Breast epithelium (tissue), 4 donors: ENCODE measurements at regions of chr4 and their contacts with region 1.

Region 1: GRCh38 chr4:156915221-156915620 is 56.4 kb downstream of the PDGFC start:
- DNase-seq: no peak
- H3K4me3 ChIP-seq: no peak overlapping the region
- H3K27ac ChIP-seq: no peak overlapping the region
- H3K4me1 ChIP-seq: no peaks in the 10 kb centered on the region
- H3K27me3 ChIP-seq: no peaks in the 10 kb centered on the region
- CTCF ChIP-seq: no peak
- POLR2A ChIP-seq: no peak

Region 2: DNA sequence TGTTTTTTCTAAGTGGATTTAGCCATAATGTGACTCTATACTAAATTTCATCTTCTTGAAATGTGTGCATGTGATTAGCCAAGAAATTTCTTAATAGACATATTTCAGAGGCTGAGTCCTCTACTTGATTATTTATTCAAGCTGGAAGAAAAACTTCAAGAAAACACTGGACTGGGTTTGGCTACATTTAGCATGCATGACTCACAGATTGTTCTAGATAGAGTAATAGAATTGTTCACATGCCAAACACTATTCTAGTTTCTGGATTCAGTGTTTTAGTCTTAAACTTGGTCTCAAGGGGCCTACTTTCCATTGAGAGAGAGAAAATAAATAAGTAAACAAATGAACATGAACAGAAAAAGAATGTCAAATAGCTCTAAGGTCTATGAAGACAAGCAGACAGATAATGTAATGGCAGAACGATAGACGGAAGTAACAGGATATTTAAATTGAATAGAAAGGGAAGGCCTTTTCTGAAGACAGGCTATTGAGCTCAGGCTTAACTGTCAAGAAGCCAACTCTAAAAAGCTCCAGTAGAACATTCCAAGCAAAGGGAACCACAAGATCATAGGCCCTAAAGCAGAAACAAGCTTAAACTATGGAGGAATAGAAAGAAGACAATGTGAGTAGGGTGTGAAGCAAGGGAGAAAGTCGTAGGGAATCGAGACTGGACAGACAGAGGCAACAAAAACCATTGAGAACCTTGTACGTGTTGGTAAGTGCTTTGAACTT is 1399.7 kb after region 1 on chr4:
- intact Hi-C with region 1: loop called (anchors 5 kb)
- DNase-seq: no peak
- H3K4me3 ChIP-seq: no peak overlapping the region
- H3K27ac ChIP-seq: peak overlapping the region; percentile 56 to 78
- H3K4me1 ChIP-seq: no peaks in the 10 kb centered on the region
- H3K27me3 ChIP-seq: no peaks in the 10 kb centered on the region
- CTCF ChIP-seq: no peak
- POLR2A ChIP-seq: no peak